Adrenal gland (tissue), 19 donors: ENCODE measurements at regions of chr1 and their contacts with region 1.

Region 1: DNA sequence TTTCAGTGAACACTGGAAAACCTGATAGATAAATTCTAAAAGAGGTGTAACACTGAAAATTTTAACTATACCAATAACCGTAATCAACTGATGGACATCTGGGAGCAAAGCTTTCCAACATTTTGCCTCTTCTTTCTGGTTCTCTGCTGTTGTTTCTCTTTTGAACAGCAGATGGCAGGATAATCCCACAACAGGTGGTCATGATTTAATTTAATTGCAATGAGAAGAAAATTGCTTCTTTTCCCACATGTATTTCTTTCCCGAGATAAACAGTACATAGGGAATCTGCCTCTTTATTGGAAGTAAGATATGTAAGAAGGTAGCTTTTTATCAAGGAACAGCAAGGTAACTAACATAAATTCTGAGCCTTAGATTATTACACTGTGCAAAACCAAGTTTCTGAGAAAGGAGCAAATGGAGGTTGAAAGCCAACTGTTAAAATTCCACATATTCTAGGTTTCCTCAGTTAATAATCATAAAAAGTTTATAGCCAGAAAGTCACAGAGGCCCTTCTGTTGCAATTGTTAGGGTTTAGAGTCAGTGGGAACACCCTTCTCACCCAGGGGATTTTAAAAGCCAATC is 72.9 kb downstream of the RPS6KA1 start:
- DNase-seq: peak in 4 of 7 donors; percentile 29 to 67 (median 61)
- H3K4me3 ChIP-seq: no peak overlapping the region
- H3K27ac ChIP-seq: no peak overlapping the region
- H3K4me1 ChIP-seq: no peaks in the 10 kb centered on the region
- H3K27me3 ChIP-seq: no peaks in the 10 kb centered on the region
- CTCF ChIP-seq: peak; percentile 70 to 97 (median 92)
- POLR2A ChIP-seq: no peak

Region 2: DNA sequence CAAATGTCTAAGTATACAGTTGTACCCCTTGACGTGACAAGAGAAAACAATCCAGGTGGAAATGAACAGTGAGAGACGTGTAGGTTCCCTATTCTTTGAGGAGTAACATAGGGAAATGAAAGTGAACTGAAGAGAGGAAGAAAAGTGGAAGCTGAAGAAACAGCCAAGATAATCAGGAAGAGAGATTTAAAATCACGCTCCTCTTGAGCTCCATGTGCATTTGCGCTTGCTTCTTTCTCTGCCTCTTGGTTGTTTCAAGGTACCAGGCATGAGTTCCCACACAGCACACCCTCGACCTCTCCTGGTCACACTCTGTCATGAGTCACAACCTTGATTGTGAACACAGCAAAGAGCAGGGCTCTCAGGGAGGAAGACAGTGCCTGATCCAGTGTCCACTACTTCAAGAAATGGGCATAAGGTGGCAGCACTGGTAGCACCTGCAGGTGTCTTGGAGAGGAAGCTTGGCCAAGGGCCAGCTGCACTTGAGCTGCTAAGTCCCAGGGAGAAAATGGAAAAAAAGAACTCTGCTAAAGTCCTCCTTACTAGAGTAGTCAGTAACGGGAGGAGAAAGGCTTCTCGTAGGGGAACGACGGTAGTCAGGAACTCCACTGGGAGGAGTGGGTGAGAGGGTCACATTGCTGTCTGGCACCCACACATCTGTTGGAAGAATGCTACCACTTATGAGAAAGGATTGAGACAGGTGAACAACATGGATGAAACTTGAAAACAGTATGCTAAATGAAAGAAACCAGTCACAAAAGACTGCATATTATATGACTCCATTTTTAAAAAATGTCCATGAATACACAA is 75.0 kb after region 1 on chr1:
- intact Hi-C with region 1: loop called (anchors 5 kb)
- DNase-seq: peak; percentile 78 to 94 (median 85)
- H3K4me3 ChIP-seq: peak overlapping the region in 1 of 4 donors; percentile 24
- H3K27ac ChIP-seq: peak overlapping the region in 4 of 5 donors; percentile 13 to 33 (median 16)
- H3K4me1 ChIP-seq: peaks cover 0 to 12% of the 10 kb centered on the region in 2 donors
- H3K27me3 ChIP-seq: no peaks in the 10 kb centered on the region
- CTCF ChIP-seq: peak; percentile 14 to 74 (median 65)
- POLR2A ChIP-seq: no peak

Region 3: DNA sequence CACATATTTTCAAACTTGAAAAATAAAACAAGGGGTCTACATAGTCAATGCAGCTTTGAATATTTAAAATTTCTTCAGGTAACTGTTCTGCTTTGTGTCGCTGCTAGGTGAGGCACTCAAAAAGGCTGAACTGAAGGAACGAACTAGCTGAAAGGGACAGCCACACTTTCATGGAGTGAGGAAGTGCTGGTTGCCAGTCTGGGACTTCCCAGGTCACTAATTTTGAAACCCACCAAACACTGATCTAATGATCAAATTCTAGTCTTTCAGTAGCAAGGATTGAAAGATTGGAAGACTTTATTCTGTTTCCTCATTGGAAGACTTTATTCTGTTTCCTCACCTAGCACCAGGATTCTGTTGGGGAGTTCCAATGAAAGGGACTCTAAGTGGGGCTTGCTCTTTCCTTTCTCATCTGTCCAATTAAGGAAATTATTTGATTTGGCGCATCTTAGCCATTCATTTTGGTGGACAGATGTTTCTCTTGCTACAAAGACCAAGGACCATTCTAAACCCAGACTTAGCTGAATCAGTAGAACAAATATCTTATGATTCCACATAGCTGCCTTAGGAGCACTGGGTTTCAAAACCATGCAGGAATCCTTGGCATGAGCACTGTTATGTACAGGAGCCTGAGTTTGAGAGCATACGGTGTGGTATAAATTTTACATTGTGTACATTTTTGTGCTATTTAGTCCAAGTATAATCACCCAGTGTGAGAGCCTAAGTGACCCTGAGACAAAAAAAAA is 82.5 kb after region 1 on chr1:
- intact Hi-C with region 1: loop called in 1 of 2 experiments (anchors 5 kb)
- DNase-seq: no peak
- H3K4me3 ChIP-seq: no peak overlapping the region
- H3K27ac ChIP-seq: no peak overlapping the region
- H3K4me1 ChIP-seq: no peaks in the 10 kb centered on the region
- H3K27me3 ChIP-seq: no peaks in the 10 kb centered on the region
- CTCF ChIP-seq: no peak
- POLR2A ChIP-seq: no peak

Region 4: GRCh38 chr1:26787706-26788514 is 185.4 kb after region 1 on chr1 and contains the start of gene PIGV:
- intact Hi-C with region 1: loop called (anchors 2 to 5 kb)
- DNase-seq: peak; percentile 83 to 91 (median 87)
- H3K4me3 ChIP-seq: peak within 1 kb of the TSS; percentile 36 to 80 (median 72)
- H3K27ac ChIP-seq: peak within 1 kb of the TSS; percentile 91 to 99 (median 98)
- H3K4me1 ChIP-seq: peaks cover 41 to 58% of the 10 kb centered on the region in 2 donors
- H3K27me3 ChIP-seq: no peaks in the 10 kb centered on the region
- CTCF ChIP-seq: peak in 4 of 6 experiments; percentile 24 to 54 (median 40)
- POLR2A ChIP-seq: peak; percentile 47 to 53
- total RNA-seq, gene PIGV: 11.8 to 43.1 (median 34.1) TPM

Region 5: DNA sequence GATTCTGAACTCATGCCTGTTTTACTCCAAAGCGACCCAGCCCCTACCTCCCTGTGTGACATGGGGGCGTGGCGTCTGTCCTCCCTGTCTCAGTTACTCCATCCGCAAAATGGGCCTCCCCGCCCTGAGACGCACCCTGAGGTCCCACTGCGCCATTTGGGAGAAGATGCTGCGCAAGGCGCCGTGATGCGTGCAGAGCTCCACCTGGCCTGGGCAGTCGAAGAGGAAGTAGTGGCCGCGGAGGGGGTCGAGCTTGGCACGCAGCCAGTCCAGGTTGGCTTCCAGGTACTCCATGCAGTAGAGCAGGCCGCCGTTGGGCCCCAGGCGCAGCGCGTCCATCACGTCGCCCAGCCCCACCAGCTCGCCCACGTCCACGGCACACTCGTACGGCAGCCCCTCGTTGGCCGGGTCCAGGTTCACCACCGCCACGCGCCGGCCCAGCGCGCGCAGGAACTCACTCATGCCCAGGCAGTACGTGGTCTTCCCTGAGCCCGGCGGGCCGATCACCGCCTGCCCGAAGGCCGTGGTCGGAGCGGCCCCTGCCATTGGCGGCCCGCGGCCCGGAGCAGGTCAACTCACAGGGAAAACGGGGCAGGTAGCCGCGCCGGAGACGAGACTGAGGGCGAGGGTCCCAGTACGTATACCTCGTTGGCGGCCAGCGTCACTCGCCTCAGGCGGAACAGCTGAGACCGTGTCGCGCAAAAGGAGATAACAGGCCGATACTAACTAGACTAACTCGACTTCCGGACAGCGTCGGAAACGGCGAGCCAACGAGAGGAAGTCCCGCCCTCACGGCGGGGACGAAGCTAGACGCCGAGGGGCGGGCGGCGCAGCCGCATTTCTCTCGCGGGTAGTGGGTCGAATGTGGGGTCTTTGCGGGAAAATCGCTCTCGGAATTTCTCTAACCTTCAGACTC is 287.3 kb after region 1 on chr1 and contains the start of gene GPN2:
- intact Hi-C with region 1: loop called in 1 of 2 experiments (anchors 10 kb)
- DNase-seq: peak; percentile 79 to 88 (median 82)
- H3K4me3 ChIP-seq: peak within 1 kb of the TSS; percentile 53 to 96 (median 76)
- H3K27ac ChIP-seq: peak within 1 kb of the TSS; percentile 63 to 99 (median 89)
- H3K4me1 ChIP-seq: peaks cover 7 to 10% of the 10 kb centered on the region in 2 donors
- H3K27me3 ChIP-seq: no peaks in the 10 kb centered on the region
- CTCF ChIP-seq: no peak
- POLR2A ChIP-seq: peak; percentile 62 to 85
- total RNA-seq, gene GPN2: 17.2 to 50.7 (median 28.4) TPM